ENCODE measurements at regions of chr3 and their contacts with region 1.

Region 1: GRCh38 chr3:53941956-53942355 is 50.3 kb upstream of the SELENOK start:
- DNase-seq: no peak
- ATAC-seq: peak in 1 of 2 donors; percentile 56

Region 2: GRCh38 chr3:54014067-54014466 is 72.1 kb after region 1 on chr3:
- intact Hi-C with region 1: no loop called
- DNase-seq: no peak
- ATAC-seq: no peak

Region 3: DNA sequence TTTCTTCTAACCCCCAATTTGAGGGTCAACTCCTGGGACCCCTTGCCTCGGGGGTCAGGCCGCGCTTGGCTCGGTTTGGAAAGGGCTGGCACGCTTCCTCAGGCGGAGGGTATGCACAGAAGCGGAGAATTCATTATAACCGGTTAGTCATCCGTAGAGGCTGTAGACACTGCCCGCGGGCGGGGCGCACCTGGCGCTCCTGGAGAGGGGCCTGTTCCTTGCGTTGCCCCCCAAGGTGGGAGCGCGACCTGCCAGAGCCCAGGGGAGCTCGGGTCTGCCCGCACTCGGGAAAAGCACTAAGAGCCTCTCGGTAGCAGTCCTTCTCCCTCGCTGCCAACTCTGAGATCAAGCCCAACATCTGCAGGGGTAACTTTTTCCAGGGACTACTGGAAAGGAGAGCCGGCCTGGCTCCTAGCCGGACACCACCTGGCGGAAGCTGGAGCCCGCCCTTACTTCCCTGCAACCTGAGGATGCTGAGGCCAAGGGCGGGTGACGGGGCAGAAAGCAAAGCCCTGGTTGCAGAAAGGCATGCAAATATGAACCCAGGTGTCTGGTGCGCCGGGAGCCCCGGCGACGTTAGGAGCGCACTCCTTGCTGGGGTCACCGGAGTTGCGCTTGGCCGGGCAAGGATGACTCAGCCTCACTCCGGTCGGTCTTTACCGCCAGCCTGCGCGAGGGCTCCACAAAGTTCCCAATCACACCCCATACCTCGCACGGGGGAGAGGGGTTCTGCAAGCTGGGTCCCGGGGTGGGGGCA is 178.9 kb after region 1 on chr3:
- intact Hi-C with region 1: loop called in 1 of 2 experiments (anchors 10 kb)
- DNase-seq: no peak
- ATAC-seq: peak in 1 of 2 donors; percentile 49

Region 4: DNA sequence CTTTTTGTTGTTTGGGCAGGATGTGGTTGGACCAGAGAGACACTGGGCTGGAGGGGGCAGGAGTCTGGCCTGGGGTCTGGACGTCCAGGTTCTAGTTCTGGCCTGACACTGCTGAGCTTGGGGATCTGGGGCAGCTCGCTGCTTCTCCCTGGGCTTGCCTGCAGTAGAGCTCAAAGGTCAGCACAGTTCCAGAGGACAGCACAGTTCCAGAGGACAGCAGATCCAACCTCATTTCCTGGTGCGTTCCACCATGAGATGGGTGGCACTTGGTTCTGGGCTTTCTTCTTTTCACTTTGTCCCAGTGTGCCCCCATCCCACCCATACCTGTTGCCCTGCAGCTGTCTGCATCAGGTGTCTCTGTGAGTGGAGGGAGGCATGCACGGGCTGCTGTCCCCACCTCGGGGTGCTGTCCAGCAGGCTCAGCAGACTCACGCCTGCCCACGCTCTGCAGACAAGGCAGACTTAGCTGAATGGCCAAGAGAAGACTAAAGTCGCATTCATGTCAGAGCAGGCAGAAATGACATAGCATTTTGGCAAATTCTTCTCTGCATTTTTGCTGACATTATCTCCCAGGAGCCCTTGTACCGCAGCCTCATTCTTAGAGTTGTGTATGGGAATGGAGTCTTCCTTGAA is 197.1 kb after region 1 on chr3:
- intact Hi-C with region 1: loop called in 1 of 2 experiments (anchors 10 kb)
- DNase-seq: no peak
- ATAC-seq: peak in 1 of 2 donors; percentile 59